ENCODE measurements at regions of chr5 and their contacts with region 1.

Region 1: DNA sequence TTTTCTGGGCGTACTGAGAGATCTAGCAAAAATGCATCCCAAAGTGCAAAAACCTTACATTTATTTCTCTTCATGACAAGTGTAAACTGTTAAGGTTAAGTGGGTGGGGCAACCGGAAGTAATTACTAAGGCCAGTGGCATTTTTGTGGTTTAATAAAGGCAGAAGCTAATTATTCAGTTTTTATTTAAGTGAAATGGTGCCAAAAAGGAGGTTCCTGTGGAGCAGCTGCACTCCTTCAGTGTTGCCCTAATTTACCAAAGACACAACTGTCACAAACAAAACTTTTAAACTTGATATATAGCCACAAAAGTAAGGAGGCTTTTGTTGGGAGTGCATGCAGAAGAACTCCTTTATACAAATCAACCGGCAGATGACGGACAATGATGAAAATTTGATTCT is 81.6 kb downstream of the NDUFS4 start:
- DNase-seq: no peak
- ATAC-seq: no peak

Region 2: GRCh38 chr5:54457094-54457862 is 815.2 kb after region 1 on chr5:
- intact Hi-C with region 1: loop called (anchors 10 kb)
- DNase-seq: no peak
- ATAC-seq: peak; percentile 59